CD4-positive, alpha-beta T cell (primary cell): ENCODE measurements at regions of chr14 and their contacts with region 1.

Region 1: DNA sequence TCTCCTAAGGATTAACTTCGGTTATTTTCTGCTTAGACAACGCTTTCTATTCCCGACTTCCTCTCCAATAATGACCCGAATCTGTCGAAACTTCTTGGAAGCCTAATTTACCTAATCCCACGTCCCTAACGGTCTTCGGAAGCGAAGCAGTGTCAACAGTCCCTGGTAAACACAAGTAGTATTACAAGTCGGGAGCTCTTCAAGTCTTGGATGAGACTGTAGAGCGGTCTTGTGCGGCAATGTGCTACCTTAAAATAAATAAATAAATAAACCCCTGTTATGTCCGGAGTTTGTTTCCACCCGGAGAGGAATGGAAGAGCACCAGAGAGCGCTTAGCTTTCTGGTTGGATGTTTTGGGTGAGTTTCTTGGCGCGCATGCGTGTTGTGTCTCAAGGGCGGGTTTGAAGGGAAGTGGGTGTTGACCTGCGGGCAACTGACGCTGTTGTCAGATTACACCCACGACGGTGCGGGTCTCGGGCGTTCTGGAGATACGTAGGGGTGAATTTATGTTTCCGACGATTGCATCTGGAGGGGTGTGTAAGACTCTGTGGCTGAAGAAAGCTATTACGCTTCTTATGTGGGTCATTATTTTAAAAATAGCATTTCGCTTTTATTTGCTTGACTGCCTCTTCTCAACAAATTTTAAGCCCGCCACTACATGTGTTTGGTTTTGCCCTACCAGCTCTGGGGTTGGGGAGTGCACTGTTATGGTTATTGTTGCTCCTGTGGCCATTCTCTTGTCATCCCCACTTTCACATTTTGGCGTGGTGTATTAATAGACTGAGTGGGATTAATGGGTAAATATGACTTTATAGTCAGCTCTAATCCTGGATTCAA is at the starts of genes KIAA0586 and TIMM9:
- DNase-seq: peak; percentile 91 to 99 (median 96)
- ATAC-seq: peak; percentile 90
- H3K4me3 ChIP-seq: peak within 1 kb of the TSS; percentile 81
- H3K4me3 Mint-ChIP-seq: peak within 1 kb of the TSS; percentile 92
- H3K27ac ChIP-seq: peak within 1 kb of the TSS; percentile 86 to 95
- H3K27ac Mint-ChIP-seq: peak within 1 kb of the TSS; percentile 93
- H3K4me1 ChIP-seq: peaks cover 18% of the 10 kb centered on the region
- H3K4me1 Mint-ChIP-seq: peaks cover 70% of the 10 kb centered on the region
- H3K27me3 ChIP-seq: no peaks in the 10 kb centered on the region
- H3K27me3 Mint-ChIP-seq: no peaks in the 10 kb centered on the region
- CTCF ChIP-seq: no peak
- total RNA-seq, gene KIAA0586: 16.5 to 18.2 TPM
- total RNA-seq, gene TIMM9: 33.1 to 34.9 TPM

Region 2: GRCh38 chr14:57268161-57269069 is 1159.1 kb before region 1 on chr14 and contains the starts of genes AP5M1 and EXOC5:
- CTCF ChIA-PET with region 1: no interaction called
- POLR2A ChIA-PET with region 1: interaction called, 7 read pairs
- intact Hi-C with region 1: loop called (anchors 2 to 10 kb)
- DNase-seq: peak; percentile 81 to 97 (median 89)
- ATAC-seq: peak; percentile 84
- H3K4me3 ChIP-seq: peak within 1 kb of the TSS; percentile 76
- H3K4me3 Mint-ChIP-seq: peak within 1 kb of the TSS; percentile 99
- H3K27ac ChIP-seq: peak within 1 kb of the TSS; percentile 91
- H3K27ac Mint-ChIP-seq: peak within 1 kb of the TSS; percentile 99
- H3K4me1 ChIP-seq: peaks cover 17% of the 10 kb centered on the region
- H3K4me1 Mint-ChIP-seq: peaks cover 87% of the 10 kb centered on the region
- H3K27me3 ChIP-seq: no peaks in the 10 kb centered on the region
- H3K27me3 Mint-ChIP-seq: no peaks in the 10 kb centered on the region
- CTCF ChIP-seq: no peak
- total RNA-seq, gene AP5M1: 39.2 to 40.4 TPM
- total RNA-seq, gene EXOC5: 17.1 to 18.1 TPM

Region 3: GRCh38 chr14:57660208-57660607 is 767.3 kb before region 1 on chr14:
- CTCF ChIA-PET with region 1: no interaction called
- POLR2A ChIA-PET with region 1: no interaction called
- intact Hi-C with region 1: no loop called
- DNase-seq: no peak
- ATAC-seq: no peak
- H3K4me3 ChIP-seq: no peak overlapping the region
- H3K4me3 Mint-ChIP-seq: no peak overlapping the region
- H3K27ac ChIP-seq: no peak overlapping the region
- H3K27ac Mint-ChIP-seq: no peak overlapping the region
- H3K4me1 ChIP-seq: no peaks in the 10 kb centered on the region
- H3K4me1 Mint-ChIP-seq: no peaks in the 10 kb centered on the region
- H3K27me3 ChIP-seq: no peaks in the 10 kb centered on the region
- H3K27me3 Mint-ChIP-seq: no peaks in the 10 kb centered on the region
- CTCF ChIP-seq: no peak

Region 4: DNA sequence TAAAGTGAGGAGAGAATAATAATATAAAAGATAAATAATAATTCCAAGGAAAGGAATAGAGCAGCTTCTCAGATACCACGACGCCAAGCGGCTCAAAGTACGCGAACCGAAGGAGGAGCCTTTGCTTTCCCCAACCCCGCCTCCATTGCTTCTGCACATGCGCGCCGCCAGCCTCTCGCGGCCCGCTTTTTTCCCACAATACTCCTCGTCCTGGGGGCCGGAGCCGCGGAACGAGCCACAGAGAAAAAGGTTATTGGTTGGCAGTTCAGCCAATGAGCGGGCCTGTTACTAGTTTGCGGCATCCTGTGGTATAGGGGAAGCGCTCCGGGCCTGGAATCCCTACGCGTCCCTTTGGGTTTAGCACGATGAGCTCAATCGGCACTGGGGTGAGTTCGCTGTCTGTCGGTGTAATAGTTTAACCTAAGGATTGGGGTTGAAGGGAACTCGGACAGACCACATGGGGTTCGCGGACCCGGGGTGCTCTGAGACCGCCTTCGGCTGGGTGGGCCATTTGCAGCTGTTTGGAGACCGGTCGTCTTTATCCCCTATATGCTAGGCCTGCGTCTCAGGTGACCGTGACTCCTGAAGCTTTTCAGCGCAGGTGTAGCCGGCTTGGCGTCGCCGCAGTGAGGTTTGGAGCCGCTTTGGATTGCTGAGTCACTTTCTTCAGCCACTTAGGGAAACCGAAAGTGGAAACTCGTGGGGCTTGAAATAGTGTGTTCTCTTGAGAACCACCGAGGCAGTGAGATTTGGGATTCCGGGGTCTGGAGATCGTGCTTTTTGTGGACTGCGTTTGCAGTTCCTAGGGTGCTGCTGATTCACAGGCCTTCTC is 182.7 kb before region 1 on chr14 and contains the start of gene PSMA3:
- CTCF ChIA-PET with region 1: no interaction called
- POLR2A ChIA-PET with region 1: interaction called, 22 read pairs
- intact Hi-C with region 1: loop called (anchors 1 to 2 kb)
- DNase-seq: peak; percentile 96 to 99 (median 97)
- ATAC-seq: peak; percentile 89
- H3K4me3 ChIP-seq: peak within 1 kb of the TSS; percentile 72
- H3K4me3 Mint-ChIP-seq: peak within 1 kb of the TSS; percentile 99
- H3K27ac ChIP-seq: peak within 1 kb of the TSS; percentile 93 to 96
- H3K27ac Mint-ChIP-seq: peak within 1 kb of the TSS; percentile 99
- H3K4me1 ChIP-seq: peaks cover 12% of the 10 kb centered on the region
- H3K4me1 Mint-ChIP-seq: peaks cover 52% of the 10 kb centered on the region
- H3K27me3 ChIP-seq: no peaks in the 10 kb centered on the region
- H3K27me3 Mint-ChIP-seq: no peaks in the 10 kb centered on the region
- CTCF ChIP-seq: no peak
- total RNA-seq, gene PSMA3: 104 to 108 TPM

Region 5: DNA sequence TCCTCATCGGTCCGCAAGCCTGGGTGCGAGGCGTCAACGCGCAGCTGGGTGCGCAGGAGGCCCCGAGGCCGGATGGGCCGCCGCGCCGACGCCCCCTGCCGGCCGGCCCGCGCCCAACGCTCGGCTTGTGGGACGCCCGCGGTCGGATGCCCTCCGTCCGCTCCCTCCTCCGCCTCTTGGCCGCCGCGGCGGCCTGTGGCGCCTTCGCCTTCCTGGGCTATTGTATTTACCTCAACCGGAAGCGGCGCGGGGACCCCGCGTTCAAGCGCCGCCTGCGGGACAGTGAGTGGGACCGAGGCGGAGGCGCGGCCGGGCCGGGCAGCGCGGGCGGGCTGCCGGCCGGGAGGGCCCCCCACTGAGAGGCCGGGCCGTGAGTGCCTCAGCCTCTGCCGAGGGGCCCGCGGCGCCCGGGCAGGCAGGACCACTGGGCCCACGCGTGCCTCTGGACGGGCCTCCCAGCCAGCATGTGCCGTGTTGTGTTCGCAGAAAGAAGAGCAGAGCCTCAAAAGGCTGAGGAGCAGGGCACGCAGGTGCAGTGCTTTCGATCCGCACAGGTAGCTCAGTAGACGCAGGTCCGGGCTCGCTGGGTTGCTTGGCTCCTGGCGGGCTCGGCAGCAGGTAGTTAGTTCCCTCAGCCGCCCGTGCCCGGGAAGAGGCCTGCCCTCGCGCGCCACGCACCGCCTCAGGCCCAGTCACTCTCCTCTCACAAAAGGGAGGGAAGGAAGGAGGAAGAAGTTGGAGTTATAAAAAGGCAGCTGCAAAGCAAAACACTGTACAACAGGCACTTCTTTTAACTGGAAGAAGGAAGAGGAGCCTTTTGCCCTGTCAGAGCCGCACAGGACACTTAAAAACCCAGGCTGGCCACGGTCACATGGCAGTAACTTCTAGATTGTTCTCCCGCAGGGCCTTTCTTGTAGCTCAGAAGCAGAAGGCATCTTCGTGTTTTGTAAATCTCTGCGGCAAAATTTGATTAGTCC is 31.4 kb before region 1 on chr14 and contains the start of gene TOMM20L:
- CTCF ChIA-PET with region 1: interaction called, 23 read pairs
- POLR2A ChIA-PET with region 1: interaction called, 51 read pairs
- intact Hi-C with region 1: loop called in 1 of 2 experiments (anchors 2 kb)
- DNase-seq: peak; percentile 48 to 88 (median 66)
- ATAC-seq: peak; percentile 77
- H3K4me3 ChIP-seq: peak within 1 kb of the TSS; percentile 71
- H3K4me3 Mint-ChIP-seq: peak within 1 kb of the TSS; percentile 88
- H3K27ac ChIP-seq: peak within 1 kb of the TSS; percentile 69 to 75
- H3K27ac Mint-ChIP-seq: peak within 1 kb of the TSS; percentile 85
- H3K4me1 ChIP-seq: peaks cover 13% of the 10 kb centered on the region
- H3K4me1 Mint-ChIP-seq: peaks cover 12% of the 10 kb centered on the region
- H3K27me3 ChIP-seq: no peaks in the 10 kb centered on the region
- H3K27me3 Mint-ChIP-seq: no peaks in the 10 kb centered on the region
- CTCF ChIP-seq: peak; percentile 80
- total RNA-seq, gene TOMM20L: 0.56 TPM in 1 of 2 experiments, not detected in the other

Region 6: DNA sequence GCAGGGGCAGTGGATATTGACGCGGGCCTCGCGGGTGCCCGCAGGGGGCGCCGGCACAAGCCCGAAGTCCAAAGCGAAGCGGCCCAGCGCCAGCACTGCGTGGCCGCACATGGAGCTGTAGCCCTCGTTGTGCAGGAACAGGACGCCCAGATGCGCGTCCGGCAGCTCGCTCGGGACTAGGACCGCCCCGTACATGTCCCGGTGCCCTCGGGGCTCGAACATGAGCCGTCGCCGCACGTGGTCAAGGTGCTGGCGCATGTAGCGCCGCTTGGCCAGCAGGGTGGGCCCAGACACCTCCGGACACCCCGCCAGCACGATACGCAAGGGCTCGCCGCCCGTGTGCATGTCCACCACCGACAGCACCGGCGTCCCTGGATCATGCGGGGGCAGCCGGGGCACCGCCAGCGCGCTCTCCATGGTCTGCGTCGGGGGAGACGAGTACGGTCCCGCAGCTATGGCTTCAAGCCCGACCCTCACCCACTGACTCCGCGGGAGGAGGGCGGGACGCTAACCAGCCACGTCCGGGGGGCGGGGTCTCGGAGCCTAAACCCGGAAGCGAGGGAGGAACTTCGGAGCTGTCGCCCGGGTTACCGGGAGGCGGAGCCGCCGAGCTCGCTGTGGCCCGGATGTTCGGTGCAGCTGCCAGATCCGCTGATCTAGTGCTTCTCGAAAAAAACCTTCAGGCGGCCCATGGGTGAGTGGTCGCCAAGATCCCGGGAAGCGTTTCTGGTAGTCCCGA is 1056.6 kb after region 1 on chr14 and contains the starts of genes JKAMP and L3HYPDH:
- CTCF ChIA-PET with region 1: interaction called, 3 read pairs
- POLR2A ChIA-PET with region 1: interaction called, 16 read pairs
- intact Hi-C with region 1: loop called in 1 of 2 experiments (anchors 5 kb)
- DNase-seq: peak; percentile 95 to 99 (median 97)
- ATAC-seq: peak; percentile 95
- H3K4me3 ChIP-seq: peak within 1 kb of the TSS; percentile 99
- H3K4me3 Mint-ChIP-seq: peak within 1 kb of the TSS; percentile 99
- H3K27ac ChIP-seq: peak within 1 kb of the TSS; percentile 62 to 63
- H3K27ac Mint-ChIP-seq: peak within 1 kb of the TSS; percentile 96
- H3K4me1 ChIP-seq: peaks cover 39% of the 10 kb centered on the region
- H3K4me1 Mint-ChIP-seq: peaks cover 73% of the 10 kb centered on the region
- H3K27me3 ChIP-seq: no peaks in the 10 kb centered on the region
- H3K27me3 Mint-ChIP-seq: no peaks in the 10 kb centered on the region
- CTCF ChIP-seq: peak; percentile 28
- total RNA-seq, gene JKAMP: 9.4 to 9.8 TPM
- total RNA-seq, gene L3HYPDH: 10.6 to 11.1 TPM